A549 (cell line): ENCODE measurements at regions of chr17 and their contacts with region 1.

Region 1: GRCh38 chr17:5031365-5032082 is 3.7 kb downstream of the SLC52A1 start:
- DNase-seq: peak; percentile 86
- ATAC-seq: peak; percentile 76 to 79
- H3K4me3 ChIP-seq: peak overlapping the region; percentile 42
- H3K27ac ChIP-seq: peak overlapping the region; percentile 70 to 90
- H3K4me1 ChIP-seq: peaks cover 3% of the 10 kb centered on the region; the same call in 1 of the 3 replicates
- CTCF ChIP-seq: peak; percentile 65
- EP300 ChIP-seq: no peak
- POLR2A ChIP-seq: 0 out of 2 replicates have a peak, but pooled peaks have one; percentile 10
- RAD21 ChIP-seq: peak; percentile 47 to 55; a peak in 4 of 5 replicates

Region 2: DNA sequence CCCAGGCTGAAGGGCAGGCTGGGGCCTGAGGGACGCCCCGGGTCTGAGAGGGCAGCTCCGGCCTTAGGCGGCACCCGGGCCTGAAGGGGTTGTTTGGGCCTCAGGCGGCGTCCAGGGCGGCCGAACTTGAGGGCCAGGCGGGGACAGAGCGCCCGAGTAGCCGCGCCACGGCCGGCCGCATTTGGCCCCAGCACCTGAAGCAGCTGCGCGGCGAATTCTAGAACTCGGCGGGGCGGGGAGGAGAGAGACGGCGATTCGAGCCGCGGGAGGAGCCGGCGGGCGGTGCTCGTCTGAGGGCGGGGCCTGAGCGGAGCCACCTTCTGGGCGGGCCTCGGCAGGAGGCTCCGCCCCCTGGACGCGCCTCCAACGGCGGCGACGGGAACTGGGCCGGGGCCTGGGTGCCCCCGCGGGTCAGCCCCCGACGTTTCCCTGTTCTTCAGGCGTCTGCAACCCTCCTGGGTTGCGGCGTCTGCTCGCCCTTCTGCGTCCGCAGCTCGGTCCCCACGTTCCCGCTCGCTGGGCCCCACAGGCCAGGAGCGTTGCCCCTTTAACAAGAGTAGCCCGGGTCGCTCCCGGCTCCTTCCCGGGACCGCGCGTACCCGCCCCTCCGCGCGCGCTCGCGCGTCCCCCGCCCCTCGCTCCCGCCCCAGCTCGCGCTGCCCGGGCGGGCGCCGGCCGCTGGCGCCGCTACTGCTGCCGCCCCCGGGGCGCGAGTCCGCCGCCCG is 34.1 kb before region 1 on chr17 and contains the starts of genes INCA1 and KIF1C:
- CTCF ChIA-PET with region 1: interaction called, 18 read pairs
- POLR2A ChIA-PET with region 1: interaction called, 5 read pairs
- DNase-seq: peak; percentile 91 to 98
- ATAC-seq: peak; percentile 86 to 93
- H3K4me3 ChIP-seq: peak within 1 kb of the TSS; percentile 95
- H3K27ac ChIP-seq: peak within 1 kb of the TSS; percentile 87 to 91
- H3K4me1 ChIP-seq: peaks cover 26% of the 10 kb centered on the region
- CTCF ChIP-seq: no peak
- EP300 ChIP-seq: no peak
- POLR2A ChIP-seq: peak; percentile 82
- RAD21 ChIP-seq: no peak
- polyA plus RNA-seq, gene INCA1: 0.66 and 0.86 TPM in 2 replicates
- polyA plus RNA-seq, gene KIF1C: 42.0 and 48.4 TPM in 2 replicates

Region 3: DNA sequence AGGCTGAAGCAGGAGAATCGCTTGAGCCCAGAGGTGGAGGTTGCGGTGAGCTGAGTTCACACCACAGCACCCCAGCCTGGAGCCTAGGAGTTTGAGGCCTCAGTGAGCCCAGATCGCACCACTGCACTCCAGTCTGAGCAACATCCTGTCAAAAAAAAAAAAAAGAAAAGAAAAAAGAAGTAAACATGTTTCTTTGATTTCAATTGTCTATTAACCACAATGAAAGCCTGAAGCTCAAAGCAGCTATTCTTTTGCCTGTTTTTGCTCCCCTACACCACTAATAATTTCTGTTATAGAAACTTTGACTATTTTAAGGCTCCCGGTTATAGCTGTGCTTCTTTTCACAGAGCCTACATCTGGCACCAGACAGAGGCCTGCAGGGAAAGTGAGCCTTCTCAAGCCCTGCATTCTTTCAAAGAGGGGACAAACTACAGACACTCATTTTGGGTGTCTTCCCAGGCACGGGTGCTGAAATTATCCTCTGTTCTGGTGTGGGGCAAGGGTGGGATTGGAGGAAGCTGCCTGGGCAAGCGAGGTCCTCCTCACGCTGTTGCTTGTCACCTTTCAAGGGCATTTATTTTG is 17.9 kb after region 1 on chr17:
- CTCF ChIA-PET with region 1: interaction called, 42 read pairs
- POLR2A ChIA-PET with region 1: no interaction called
- DNase-seq: no peak
- ATAC-seq: no peak
- H3K4me3 ChIP-seq: no peak overlapping the region
- H3K27ac ChIP-seq: no peak overlapping the region
- H3K4me1 ChIP-seq: no peaks in the 10 kb centered on the region
- CTCF ChIP-seq: no peak
- EP300 ChIP-seq: no peak
- POLR2A ChIP-seq: no peak
- RAD21 ChIP-seq: no peak

Region 4: DNA sequence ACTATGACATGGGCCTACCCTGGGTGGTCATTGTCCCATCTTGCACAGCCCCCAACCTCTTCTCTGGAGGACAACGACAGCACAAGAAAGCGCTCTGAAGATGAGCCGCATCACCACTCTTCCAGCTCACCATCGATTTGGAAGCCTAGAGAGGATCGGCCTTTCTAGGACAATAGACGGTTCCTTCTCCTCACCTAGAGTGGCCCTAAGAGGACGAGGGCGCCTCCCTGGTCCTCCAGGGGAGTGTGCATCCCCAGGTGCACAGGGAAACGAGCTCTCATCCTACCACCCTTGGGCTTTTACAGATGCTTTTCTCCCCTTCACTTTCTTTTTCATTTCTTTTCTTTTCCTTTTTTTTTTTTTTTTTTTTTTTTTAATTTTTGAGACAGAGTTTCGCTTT is 24.0 kb after region 1 on chr17:
- CTCF ChIA-PET with region 1: interaction called, 58 read pairs
- POLR2A ChIA-PET with region 1: no interaction called
- DNase-seq: peak in 1 of 2 experiments; percentile 77
- ATAC-seq: peak in 1 of 2 experiments; percentile 79; a peak in 3 of 6 replicates
- H3K4me3 ChIP-seq: no peak overlapping the region
- H3K27ac ChIP-seq: no peak overlapping the region
- H3K4me1 ChIP-seq: no peaks in the 10 kb centered on the region
- CTCF ChIP-seq: no peak
- EP300 ChIP-seq: no peak
- POLR2A ChIP-seq: no peak
- RAD21 ChIP-seq: no peak

Region 5: DNA sequence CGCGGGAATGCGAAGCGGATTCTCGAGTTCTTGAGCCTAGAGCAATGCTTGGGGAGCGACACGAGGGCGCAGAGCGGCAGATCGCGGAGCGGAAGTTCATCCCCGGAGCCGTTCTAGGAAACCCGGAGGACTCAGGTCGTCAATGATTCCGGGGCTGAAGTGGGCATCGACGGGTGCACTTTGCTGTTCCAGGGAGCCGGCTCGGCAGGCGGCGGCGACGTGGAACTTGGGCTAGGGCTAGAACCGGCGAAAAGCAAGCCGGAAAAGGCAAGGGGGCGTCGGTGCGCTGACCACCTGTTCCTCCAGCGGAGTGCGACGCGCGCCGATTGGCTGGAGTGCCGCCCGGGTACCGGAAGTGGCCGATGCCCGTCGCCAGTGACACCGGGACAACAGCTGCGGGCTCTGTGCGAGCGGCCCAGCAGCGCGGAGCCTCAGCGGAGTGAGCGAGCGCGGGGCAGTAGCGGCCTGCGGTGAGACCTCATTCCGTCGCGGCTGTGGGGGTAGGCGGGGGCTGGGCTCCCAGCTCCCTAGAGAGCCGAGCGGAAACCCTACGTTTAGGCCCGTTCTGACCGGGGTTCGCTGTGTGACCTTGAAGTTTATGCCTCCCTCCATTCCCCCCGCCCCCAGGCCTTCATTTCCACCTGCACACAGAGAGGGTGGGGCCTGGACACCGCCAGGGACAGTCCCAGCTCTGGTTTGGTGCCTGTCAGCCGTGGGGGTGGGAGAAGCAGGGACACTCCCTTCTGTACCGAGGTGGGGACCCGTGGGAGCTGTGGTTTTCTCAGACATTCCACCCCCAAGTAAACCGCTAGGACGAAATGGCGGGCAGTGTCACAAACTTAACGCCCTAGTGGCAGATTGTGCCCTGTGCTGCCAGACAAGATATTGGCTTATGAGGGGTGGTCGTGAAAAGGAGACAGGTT is 46.8 kb after region 1 on chr17 and contains the start of gene ZFP3:
- CTCF ChIA-PET with region 1: no interaction called
- POLR2A ChIA-PET with region 1: no interaction called
- DNase-seq: peak; percentile 70 to 92
- ATAC-seq: peak; percentile 96 to 98
- H3K4me3 ChIP-seq: peak within 1 kb of the TSS; percentile 61
- H3K27ac ChIP-seq: peak within 1 kb of the TSS; percentile 67 to 87
- H3K4me1 ChIP-seq: no peaks in the 10 kb centered on the region
- CTCF ChIP-seq: no peak
- EP300 ChIP-seq: no peak
- POLR2A ChIP-seq: peak; percentile 7
- RAD21 ChIP-seq: no peak
- polyA plus RNA-seq, gene ZFP3: 4.1 and 4.8 TPM in 2 replicates